ENCODE measurements at regions of chr10 and their contacts with region 1.

Region 1: GRCh38 chr10:112375721-112376395 is 1.9 kb downstream of the ACSL5 start:
- DNase-seq: peak; percentile 19 to 81 (median 32)
- ATAC-seq: peak; percentile 75
- H3K4me3 ChIP-seq: peak overlapping the region; percentile 77
- H3K4me3 Mint-ChIP-seq: peak overlapping the region; percentile 100
- H3K27ac ChIP-seq: peak overlapping the region; percentile 78 to 92
- H3K27ac Mint-ChIP-seq: peak overlapping the region; percentile 95
- H3K4me1 ChIP-seq: peaks cover 50% of the 10 kb centered on the region
- H3K4me1 Mint-ChIP-seq: peaks cover 70% of the 10 kb centered on the region
- H3K27me3 ChIP-seq: no peaks in the 10 kb centered on the region
- H3K27me3 Mint-ChIP-seq: no peaks in the 10 kb centered on the region
- CTCF ChIP-seq: no peak

Region 2: DNA sequence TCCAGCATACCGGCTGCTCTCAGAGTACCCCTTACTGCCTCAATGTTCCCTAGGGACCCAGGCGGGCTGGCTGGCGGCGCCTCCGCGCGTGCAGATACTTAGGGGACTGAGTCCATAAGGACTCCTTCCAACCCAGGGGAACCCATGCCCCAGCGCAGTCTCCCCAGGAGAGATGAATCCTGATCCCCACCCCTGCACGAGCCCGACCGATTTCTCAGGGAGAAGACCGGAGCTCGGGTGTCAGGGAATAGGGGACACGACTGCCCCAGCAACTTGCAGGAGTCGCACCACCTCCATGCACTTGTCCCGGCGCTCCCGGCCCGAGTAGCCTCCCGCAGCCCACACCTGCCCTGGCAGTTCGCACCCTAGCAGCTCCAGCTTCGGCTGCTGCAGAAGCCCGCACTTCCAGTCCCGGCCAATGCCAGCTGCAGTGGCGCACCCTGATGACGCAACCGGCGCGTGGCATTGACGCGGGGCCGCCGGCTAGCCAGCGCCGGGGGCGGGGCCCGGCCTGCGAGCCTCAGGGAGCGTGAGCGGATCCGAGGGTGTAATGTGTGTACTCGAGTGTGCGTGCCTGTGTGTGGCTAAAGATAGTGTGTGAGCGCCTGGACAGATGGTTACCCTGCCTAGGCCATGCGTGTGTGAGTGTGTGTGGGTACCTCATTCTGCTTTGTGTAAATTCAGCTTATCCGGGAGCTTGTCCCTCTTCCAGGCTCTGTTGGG is 192.4 kb before region 1 on chr10 and contains the start of gene GPAM:
- CTCF ChIA-PET with region 1: no interaction called
- POLR2A ChIA-PET with region 1: interaction called, 9 read pairs
- intact Hi-C with region 1: loop called in 1 of 2 experiments (anchors 2 kb)
- DNase-seq: peak; percentile 93 to 100 (median 98)
- ATAC-seq: peak; percentile 96
- H3K4me3 ChIP-seq: peak within 1 kb of the TSS; percentile 70
- H3K4me3 Mint-ChIP-seq: peak within 1 kb of the TSS; percentile 95
- H3K27ac ChIP-seq: peak within 1 kb of the TSS; percentile 30 to 65
- H3K27ac Mint-ChIP-seq: peak within 1 kb of the TSS; percentile 95
- H3K4me1 ChIP-seq: peaks cover 12% of the 10 kb centered on the region
- H3K4me1 Mint-ChIP-seq: peaks cover 38% of the 10 kb centered on the region
- H3K27me3 ChIP-seq: no peaks in the 10 kb centered on the region
- H3K27me3 Mint-ChIP-seq: peaks cover 9% of the 10 kb centered on the region
- CTCF ChIP-seq: no peak
- total RNA-seq, gene GPAM: 4.8 to 6.7 TPM

Region 3: DNA sequence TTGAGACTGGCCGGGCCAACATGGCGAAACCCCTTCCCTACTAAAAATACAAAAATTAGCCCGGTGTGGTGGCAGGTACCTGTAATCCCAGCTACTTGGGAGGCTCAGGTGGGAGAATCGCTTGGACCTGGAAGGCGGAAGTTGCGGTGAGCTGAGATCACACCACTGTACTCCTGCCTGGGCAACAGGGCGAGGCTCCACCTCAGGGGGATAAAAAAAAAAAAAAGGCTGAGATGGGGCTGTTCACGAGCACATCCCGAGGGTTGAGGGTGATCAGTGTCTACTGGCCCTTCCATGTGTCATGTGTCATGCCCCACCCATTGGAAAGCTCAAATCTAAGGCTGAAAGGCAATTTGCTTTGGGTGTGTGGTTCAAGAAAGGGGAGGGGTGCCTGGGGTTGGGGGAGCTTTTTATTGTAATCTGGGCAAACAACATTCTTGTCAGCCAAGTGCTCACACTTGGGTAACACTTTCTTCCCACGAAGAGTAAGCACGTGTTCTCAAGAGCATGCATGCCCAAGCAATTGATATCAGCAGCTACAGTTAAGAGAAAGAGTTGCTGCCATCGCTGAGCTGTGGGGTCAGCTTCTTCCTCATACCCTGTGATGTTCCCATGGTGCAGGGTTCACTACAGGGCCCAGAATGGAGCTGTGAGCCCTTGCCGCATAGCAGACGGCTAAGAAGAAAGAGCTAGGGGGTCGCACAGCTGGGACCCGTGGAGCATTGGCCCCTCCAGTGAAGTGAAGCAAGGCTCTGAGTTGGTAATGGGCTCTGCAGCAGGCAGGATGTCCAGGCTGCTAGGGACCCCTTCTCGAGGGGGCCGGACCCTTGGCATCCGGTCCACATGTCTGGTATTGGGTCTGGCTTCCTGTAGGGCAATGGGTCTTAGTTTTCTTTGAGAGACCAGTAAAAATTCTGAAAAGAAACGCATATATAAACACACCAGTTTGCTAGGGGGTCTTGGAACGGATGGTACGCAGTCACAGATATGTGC is 11.9 kb before region 1 on chr10:
- CTCF ChIA-PET with region 1: interaction called, 4 read pairs
- POLR2A ChIA-PET with region 1: interaction called, 15 read pairs
- intact Hi-C with region 1: no loop called
- DNase-seq: no peak
- ATAC-seq: no peak
- H3K4me3 ChIP-seq: no peak overlapping the region
- H3K4me3 Mint-ChIP-seq: no peak overlapping the region
- H3K27ac ChIP-seq: no peak overlapping the region
- H3K27ac Mint-ChIP-seq: no peak overlapping the region
- H3K4me1 ChIP-seq: peaks cover 8% of the 10 kb centered on the region
- H3K4me1 Mint-ChIP-seq: no peaks in the 10 kb centered on the region
- H3K27me3 ChIP-seq: no peaks in the 10 kb centered on the region
- H3K27me3 Mint-ChIP-seq: no peaks in the 10 kb centered on the region
- CTCF ChIP-seq: no peak

Region 4: DNA sequence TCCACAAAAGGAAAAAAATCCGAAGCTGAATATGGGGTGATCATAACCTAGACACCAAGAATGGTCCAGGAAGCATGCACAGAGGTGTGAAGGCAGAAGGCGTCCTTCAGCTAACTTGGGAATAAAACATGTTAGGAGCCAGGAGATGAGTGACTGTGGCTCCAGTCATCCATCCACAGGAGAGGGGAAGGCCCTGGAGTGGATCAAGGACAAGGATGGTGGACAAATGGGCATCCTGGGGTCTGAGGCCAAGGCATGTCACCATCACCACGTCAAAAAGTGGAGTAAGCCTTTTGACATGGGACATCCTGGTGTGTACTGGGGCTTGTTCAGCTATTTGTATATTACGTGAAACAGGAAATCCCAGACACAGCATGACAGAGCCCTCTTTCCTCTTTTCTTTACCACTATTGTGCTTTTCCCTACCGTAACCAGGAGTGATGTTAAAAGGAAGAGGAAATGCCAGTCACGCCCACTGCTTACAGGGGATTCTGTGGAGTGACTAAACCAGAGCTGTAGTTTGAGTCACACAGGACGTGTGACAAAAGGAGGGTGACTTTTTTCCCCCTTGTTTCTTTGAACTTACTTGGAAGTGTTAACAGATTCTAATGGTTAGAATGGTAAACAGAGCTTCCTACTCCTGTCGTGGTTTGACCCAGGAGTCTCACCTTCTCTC is 13.4 kb after region 1 on chr10:
- CTCF ChIA-PET with region 1: interaction called, 6 read pairs
- POLR2A ChIA-PET with region 1: interaction called, 40 read pairs
- intact Hi-C with region 1: no loop called
- DNase-seq: peak in 7 of 14 experiments; percentile 20 to 90 (median 66)
- ATAC-seq: peak; percentile 90
- H3K4me3 ChIP-seq: no peak overlapping the region
- H3K4me3 Mint-ChIP-seq: peak overlapping the region; percentile 18
- H3K27ac ChIP-seq: peak overlapping the region; percentile 49 to 65
- H3K27ac Mint-ChIP-seq: peak overlapping the region; percentile 72
- H3K4me1 ChIP-seq: peaks cover 18% of the 10 kb centered on the region
- H3K4me1 Mint-ChIP-seq: peaks cover 54% of the 10 kb centered on the region
- H3K27me3 ChIP-seq: no peaks in the 10 kb centered on the region
- H3K27me3 Mint-ChIP-seq: no peaks in the 10 kb centered on the region
- CTCF ChIP-seq: no peak

Region 5: DNA sequence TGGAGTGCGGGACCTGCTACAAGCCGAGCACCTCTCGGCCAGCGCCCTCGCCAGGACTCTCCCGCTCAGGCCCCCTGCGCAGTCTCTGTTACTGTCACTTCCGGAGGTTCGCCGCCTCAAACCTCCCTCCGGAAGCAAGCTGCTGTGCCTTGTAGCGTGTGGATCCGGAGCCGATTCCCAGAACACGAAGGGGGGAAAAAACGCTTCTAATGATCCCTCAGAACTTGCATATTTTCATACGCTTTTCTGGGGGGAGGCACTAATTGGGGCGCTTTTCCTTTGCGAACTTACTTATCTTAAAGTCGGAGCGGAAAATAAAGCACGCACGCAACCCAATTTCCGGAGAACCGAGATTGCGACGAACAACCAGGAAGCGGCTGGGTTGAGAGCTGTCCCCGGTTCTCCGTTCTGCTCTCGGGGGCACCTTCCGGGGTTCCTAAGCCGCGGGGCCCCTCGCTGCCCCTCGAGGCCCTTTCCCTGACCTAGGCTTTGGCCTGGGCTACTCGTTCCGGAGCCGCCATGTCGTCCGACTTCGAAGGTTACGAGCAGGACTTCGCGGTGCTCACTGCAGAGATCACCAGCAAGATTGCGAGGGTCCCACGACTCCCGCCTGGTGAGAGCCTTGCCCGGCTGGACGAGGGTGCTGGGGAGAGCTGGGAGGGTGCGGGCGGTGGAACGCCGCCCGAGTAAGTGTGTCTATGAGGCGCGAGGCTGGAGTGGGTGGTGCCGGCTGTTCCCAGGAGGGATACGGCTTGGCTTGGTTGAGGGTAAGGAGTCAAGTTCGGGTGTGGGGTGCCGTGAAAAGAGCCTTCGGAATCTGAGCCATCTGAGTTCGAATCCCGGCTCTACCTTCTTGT is 71.2 kb after region 1 on chr10 and contains the starts of genes VTI1A and ZDHHC6:
- CTCF ChIA-PET with region 1: no interaction called
- POLR2A ChIA-PET with region 1: interaction called, 32 read pairs
- intact Hi-C with region 1: loop called in 1 of 2 experiments (anchors 5 kb)
- DNase-seq: peak; percentile 74 to 92 (median 79)
- ATAC-seq: peak; percentile 85
- H3K4me3 ChIP-seq: peak within 1 kb of the TSS; percentile 87
- H3K4me3 Mint-ChIP-seq: peak within 1 kb of the TSS; percentile 91
- H3K27ac ChIP-seq: peak within 1 kb of the TSS; percentile 79 to 84
- H3K27ac Mint-ChIP-seq: peak within 1 kb of the TSS; percentile 89
- H3K4me1 ChIP-seq: peaks cover 16% of the 10 kb centered on the region
- H3K4me1 Mint-ChIP-seq: peaks cover 73% of the 10 kb centered on the region
- H3K27me3 ChIP-seq: no peaks in the 10 kb centered on the region
- H3K27me3 Mint-ChIP-seq: no peaks in the 10 kb centered on the region
- CTCF ChIP-seq: no peak
- total RNA-seq, gene VTI1A: 54.5 to 56.5 TPM
- total RNA-seq, gene ZDHHC6: 34.3 to 39.9 TPM

Region 6: GRCh38 chr10:112481602-112482001 is 105.7 kb after region 1 on chr10:
- CTCF ChIA-PET with region 1: no interaction called
- POLR2A ChIA-PET with region 1: no interaction called
- intact Hi-C with region 1: no loop called
- DNase-seq: no peak
- ATAC-seq: no peak
- H3K4me3 ChIP-seq: no peak overlapping the region
- H3K4me3 Mint-ChIP-seq: no peak overlapping the region
- H3K27ac ChIP-seq: no peak overlapping the region
- H3K27ac Mint-ChIP-seq: no peak overlapping the region
- H3K4me1 ChIP-seq: no peaks in the 10 kb centered on the region
- H3K4me1 Mint-ChIP-seq: peaks cover 5% of the 10 kb centered on the region
- H3K27me3 ChIP-seq: no peaks in the 10 kb centered on the region
- H3K27me3 Mint-ChIP-seq: no peaks in the 10 kb centered on the region
- CTCF ChIP-seq: no peak

Measured in CD4-positive, alpha-beta T cell (primary cell).